ENCODE measurements at regions of chr4 and their contacts with region 1.

Region 1: GRCh38 chr4:25180524-25181131 is 20.4 kb upstream of the SEPSECS start:
- DNase-seq: peak in 6 of 14 experiments; percentile 17 to 71 (median 50)
- ATAC-seq: peak; percentile 69
- H3K4me3 ChIP-seq: no peak overlapping the region
- H3K4me3 Mint-ChIP-seq: no peak overlapping the region
- H3K27ac ChIP-seq: no peak overlapping the region
- H3K27ac Mint-ChIP-seq: no peak overlapping the region
- H3K4me1 ChIP-seq: peaks cover 13% of the 10 kb centered on the region
- H3K4me1 Mint-ChIP-seq: peaks cover 43% of the 10 kb centered on the region
- H3K27me3 ChIP-seq: no peaks in the 10 kb centered on the region
- H3K27me3 Mint-ChIP-seq: no peaks in the 10 kb centered on the region
- CTCF ChIP-seq: peak; percentile 71

Region 2: GRCh38 chr4:25159884-25160713 is 20.5 kb before region 1 on chr4 and contains the start of gene SEPSECS:
- CTCF ChIA-PET with region 1: no interaction called
- POLR2A ChIA-PET with region 1: interaction called, 37 read pairs
- intact Hi-C with region 1: loop called in 1 of 2 experiments (anchors 2 kb)
- DNase-seq: peak; percentile 84 to 98 (median 92)
- ATAC-seq: peak; percentile 82
- H3K4me3 ChIP-seq: peak within 1 kb of the TSS; percentile 91
- H3K4me3 Mint-ChIP-seq: peak within 1 kb of the TSS; percentile 93
- H3K27ac ChIP-seq: peak within 1 kb of the TSS; percentile 97 to 98
- H3K27ac Mint-ChIP-seq: peak within 1 kb of the TSS; percentile 96
- H3K4me1 ChIP-seq: peaks cover 26% of the 10 kb centered on the region
- H3K4me1 Mint-ChIP-seq: peaks cover 68% of the 10 kb centered on the region
- H3K27me3 ChIP-seq: no peaks in the 10 kb centered on the region
- H3K27me3 Mint-ChIP-seq: no peaks in the 10 kb centered on the region
- CTCF ChIP-seq: no peak
- total RNA-seq, gene SEPSECS: 18.5 to 18.7 TPM

Region 3: GRCh38 chr4:25367004-25367621 is 186.5 kb after region 1 on chr4:
- CTCF ChIA-PET with region 1: interaction called, 3 read pairs
- POLR2A ChIA-PET with region 1: interaction called, 3 read pairs
- intact Hi-C with region 1: loop called (anchors 2 kb)
- DNase-seq: peak in 3 of 14 experiments; percentile 47 to 63 (median 59)
- ATAC-seq: no peak
- H3K4me3 ChIP-seq: no peak overlapping the region
- H3K4me3 Mint-ChIP-seq: no peak overlapping the region
- H3K27ac ChIP-seq: no peak overlapping the region
- H3K27ac Mint-ChIP-seq: no peak overlapping the region
- H3K4me1 ChIP-seq: no peaks in the 10 kb centered on the region
- H3K4me1 Mint-ChIP-seq: no peaks in the 10 kb centered on the region
- H3K27me3 ChIP-seq: no peaks in the 10 kb centered on the region
- H3K27me3 Mint-ChIP-seq: no peaks in the 10 kb centered on the region
- CTCF ChIP-seq: peak; percentile 72